ENCODE measurements at regions of chr22 and their contacts with region 1.

Region 1: GRCh38 chr22:30634471-30635233 is 929 bp upstream of the SLC35E4 start:
- DNase-seq: peak; percentile 96

Region 2: DNA sequence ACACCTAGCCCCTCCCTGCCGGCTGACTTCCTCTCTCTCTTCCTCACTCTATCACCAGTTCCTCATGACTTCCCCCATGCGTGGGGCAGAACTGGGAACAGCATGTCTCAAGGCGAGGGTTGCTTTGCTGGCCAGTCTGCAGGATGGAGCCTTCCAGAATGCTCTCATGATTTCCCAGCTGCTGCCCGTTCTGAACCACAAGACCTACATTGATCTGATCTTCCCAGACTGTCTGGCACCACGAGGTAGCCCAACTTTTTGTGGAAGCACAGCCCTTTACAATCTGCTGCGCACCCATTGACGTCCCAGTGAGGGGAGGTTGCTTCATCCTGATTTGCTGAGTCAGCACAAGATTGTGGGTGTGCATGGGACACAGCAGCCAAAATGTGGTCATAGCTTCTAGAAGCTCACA is 19.1 kb before region 1 on chr22:
- intact Hi-C with region 1: no loop called
- DNase-seq: no peak

Region 3: GRCh38 chr22:30754971-30755756 is 120.5 kb after region 1 on chr22:
- intact Hi-C with region 1: loop called (anchors 1 to 5 kb)
- DNase-seq: peak; percentile 75

Region 4: GRCh38 chr22:31211862-31212730 is 577.4 kb after region 1 on chr22 and contains the start of gene LIMK2:
- intact Hi-C with region 1: no loop called
- DNase-seq: peak; percentile 98
- total RNA-seq, gene LIMK2: 24.6 to 26.8 TPM

Measured in posterior vena cava (tissue), 2 donors.